Heart left ventricle (tissue), 16 donors: ENCODE measurements at regions of chr18 and their contacts with region 1.

Region 1: GRCh38 chr18:8478166-8478967 is 130.9 kb upstream of the RAB12 start:
- DNase-seq: peak; percentile 27 to 79 (median 37)
- ATAC-seq: peak; percentile 38 to 73 (median 60)
- H3K4me3 ChIP-seq: no peak overlapping the region
- H3K27ac ChIP-seq: no peak overlapping the region
- H3K4me1 ChIP-seq: peaks cover 0 to 6% (median 0%) of the 10 kb centered on the region in 12 donors
- H3K27me3 ChIP-seq: no peaks in the 10 kb centered on the region
- CTCF ChIP-seq: peak; percentile 63 to 80 (median 72)
- POLR2A ChIP-seq: no peak

Region 2: DNA sequence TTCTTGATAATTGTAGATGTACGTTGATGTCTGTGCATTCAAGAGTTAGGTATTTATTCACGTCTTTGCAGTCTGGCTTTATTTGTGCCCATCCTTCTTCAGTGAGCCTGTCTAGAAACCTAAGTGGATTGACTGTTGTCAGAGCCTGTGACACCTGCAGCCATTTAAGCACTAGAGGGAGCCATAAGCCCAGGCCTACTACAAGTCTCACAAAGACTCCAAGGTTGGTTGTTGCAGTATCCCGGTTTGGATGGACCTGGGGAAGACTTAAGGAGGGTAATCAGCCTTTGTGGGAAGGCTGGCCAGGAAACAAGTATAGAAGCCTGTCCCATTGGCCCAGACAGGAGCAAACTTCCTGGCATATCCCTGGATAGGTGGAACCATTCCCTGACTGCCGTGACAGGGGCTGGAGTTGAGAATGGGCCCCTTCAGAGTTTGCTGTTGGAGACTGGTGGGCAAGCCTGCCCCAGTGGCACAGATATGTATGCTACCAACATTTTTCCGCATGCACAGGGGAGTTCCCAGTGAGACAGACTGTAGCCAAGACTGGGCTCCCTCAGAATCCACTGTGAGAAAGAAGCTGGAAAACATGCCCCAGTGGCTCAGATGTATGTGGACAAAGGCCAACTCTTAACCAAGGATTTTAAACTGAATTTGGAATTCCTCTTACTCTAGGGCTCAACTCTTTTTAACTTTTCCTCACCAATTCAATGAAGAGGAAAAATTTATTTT is 1256.8 kb before region 1 on chr18:
- intact Hi-C with region 1: loop called in 3 of 10 experiments (anchors 5 to 10 kb)
- DNase-seq: peak in 4 of 5 donors; percentile 40 to 49 (median 42)
- ATAC-seq: peak; percentile 64 to 91 (median 90)
- H3K4me3 ChIP-seq: no peak overlapping the region
- H3K27ac ChIP-seq: no peak overlapping the region
- H3K4me1 ChIP-seq: no peaks in the 10 kb centered on the region
- H3K27me3 ChIP-seq: no peaks in the 10 kb centered on the region
- CTCF ChIP-seq: peak; percentile 62 to 79 (median 72)
- POLR2A ChIP-seq: no peak

Region 3: GRCh38 chr18:7272311-7273049 is 1205.9 kb before region 1 on chr18:
- intact Hi-C with region 1: loop called in 8 of 10 experiments (anchors 5 to 10 kb)
- DNase-seq: peak; percentile 71 to 76 (median 74)
- ATAC-seq: peak; percentile 78 to 88 (median 84)
- H3K4me3 ChIP-seq: peak overlapping the region in 9 of 12 donors; percentile 25 to 45 (median 32)
- H3K27ac ChIP-seq: peak overlapping the region; percentile 64 to 84 (median 78)
- H3K4me1 ChIP-seq: peaks cover 3 to 24% (median 19%) of the 10 kb centered on the region in 12 donors
- H3K27me3 ChIP-seq: no peaks in the 10 kb centered on the region
- CTCF ChIP-seq: peak; percentile 21 to 75 (median 58)
- POLR2A ChIP-seq: no peak

Region 4: DNA sequence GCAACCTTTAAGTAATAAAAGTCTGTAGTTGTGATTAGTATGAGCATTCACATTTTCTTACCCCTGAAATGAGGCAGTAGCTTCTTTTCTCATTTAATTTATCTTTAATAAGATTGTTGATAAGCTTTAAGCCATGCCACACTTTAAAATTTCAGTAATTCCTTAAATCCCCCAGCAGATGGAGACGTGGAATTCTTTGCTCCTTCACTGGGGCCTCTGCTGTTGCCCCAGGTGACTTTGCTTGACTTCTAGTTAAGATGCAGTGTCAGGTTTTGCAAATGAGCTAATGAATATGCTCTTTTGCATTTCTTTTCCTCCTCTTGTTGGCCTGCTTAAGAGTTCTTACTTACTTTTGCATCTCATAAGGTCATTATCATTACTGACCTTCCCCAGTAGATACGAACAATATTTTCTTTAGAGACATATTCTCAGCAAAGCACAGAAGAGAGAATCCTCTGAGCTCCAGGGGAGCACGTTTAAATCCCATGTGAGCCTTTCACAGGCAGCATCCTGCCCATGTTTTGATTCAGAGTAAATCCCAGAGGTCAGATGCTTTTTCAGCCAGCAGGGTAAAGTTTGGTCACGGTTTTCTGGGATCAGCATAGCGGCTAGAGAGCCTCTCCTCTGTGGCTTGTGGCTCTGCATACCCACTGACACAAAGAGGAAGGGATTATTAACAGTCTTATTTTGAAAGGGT is 688.4 kb before region 1 on chr18:
- intact Hi-C with region 1: loop called in 1 of 10 experiments (anchors 10 kb)
- DNase-seq: no peak
- ATAC-seq: peak; percentile 42 to 52 (median 46)
- H3K4me3 ChIP-seq: no peak overlapping the region
- H3K27ac ChIP-seq: peak overlapping the region in 9 of 12 donors; percentile 1 to 49 (median 17)
- H3K4me1 ChIP-seq: peaks cover 0 to 46% (median 15%) of the 10 kb centered on the region in 12 donors
- H3K27me3 ChIP-seq: no peaks in the 10 kb centered on the region
- CTCF ChIP-seq: peak; percentile 37 to 67 (median 55)
- POLR2A ChIP-seq: no peak

Region 5: GRCh38 chr18:8643326-8643878 is 165.0 kb after region 1 on chr18:
- intact Hi-C with region 1: no loop called
- DNase-seq: no peak
- ATAC-seq: no peak
- H3K4me3 ChIP-seq: no peak overlapping the region
- H3K27ac ChIP-seq: no peak overlapping the region
- H3K4me1 ChIP-seq: no peaks in the 10 kb centered on the region
- H3K27me3 ChIP-seq: no peaks in the 10 kb centered on the region
- CTCF ChIP-seq: no peak
- POLR2A ChIP-seq: no peak

Region 6: DNA sequence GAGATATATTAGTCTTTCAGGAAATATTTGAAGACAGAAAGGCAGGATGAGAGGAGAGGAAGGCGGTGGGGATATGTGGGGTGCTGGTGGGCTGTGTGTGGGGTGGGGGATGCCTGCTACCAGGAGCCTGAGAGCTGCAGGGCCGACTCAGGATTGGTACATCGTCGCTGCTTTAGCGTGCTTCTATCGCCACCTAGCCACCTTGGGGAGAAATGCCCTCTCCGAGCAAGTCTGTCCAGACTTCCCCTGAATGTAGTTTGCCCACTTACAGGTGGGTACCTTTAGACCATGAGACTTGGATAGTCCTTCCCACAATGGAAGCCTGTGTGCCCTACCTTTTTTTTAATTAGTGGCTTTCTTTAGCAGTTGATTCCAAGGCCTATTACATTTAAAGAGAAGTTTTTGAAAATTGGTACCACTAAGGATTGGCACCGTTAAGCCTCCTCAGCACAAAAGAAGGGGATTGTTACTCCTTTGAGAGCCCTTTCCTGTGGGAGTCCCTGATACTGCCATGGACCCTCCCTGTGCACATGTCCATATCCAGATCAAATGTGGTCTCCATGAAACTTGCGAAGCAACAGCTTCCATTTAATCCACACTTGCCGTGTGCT is 510.0 kb after region 1 on chr18:
- intact Hi-C with region 1: loop called in 2 of 10 experiments (anchors 5 to 10 kb)
- DNase-seq: peak in 4 of 5 donors; percentile 33 to 44 (median 43)
- ATAC-seq: peak; percentile 69 to 84 (median 80)
- H3K4me3 ChIP-seq: no peak overlapping the region
- H3K27ac ChIP-seq: peak overlapping the region in 1 of 12 donors; percentile 16
- H3K4me1 ChIP-seq: peaks cover 0 to 10% (median 0%) of the 10 kb centered on the region in 12 donors
- H3K27me3 ChIP-seq: no peaks in the 10 kb centered on the region
- CTCF ChIP-seq: peak; percentile 50 to 81 (median 76)
- POLR2A ChIP-seq: no peak